ENCODE measurements at regions of chr3 and their contacts with region 1.

Region 1: DNA sequence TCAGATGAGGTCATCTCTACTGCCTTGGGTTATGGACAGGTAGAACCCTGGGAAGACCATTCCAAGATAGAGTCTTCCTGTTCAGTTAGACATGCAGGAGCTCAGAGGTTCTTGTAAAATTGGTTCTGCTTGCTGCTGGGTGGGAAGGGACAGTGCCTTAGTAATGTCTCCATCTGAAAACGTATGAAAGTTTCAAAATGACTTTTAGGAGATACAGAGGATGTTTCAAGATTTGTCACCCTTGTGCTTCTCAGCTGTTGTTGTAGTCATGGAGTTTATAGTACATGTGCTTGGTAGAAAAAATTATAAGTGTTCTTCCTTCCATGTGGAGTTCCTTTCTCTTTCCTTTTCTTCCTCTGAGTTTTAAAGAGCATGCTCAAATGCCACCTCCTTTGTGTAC is 885.2 kb upstream of the CFAP20DC start:
- DNase-seq: peak; percentile 6
- H3K4me3 Mint-ChIP-seq: peak overlapping the region; percentile 54
- H3K27ac Mint-ChIP-seq: peak overlapping the region; percentile 82
- H3K4me1 Mint-ChIP-seq: peaks cover 43% of the 10 kb centered on the region
- H3K27me3 Mint-ChIP-seq: no peaks in the 10 kb centered on the region

Region 2: DNA sequence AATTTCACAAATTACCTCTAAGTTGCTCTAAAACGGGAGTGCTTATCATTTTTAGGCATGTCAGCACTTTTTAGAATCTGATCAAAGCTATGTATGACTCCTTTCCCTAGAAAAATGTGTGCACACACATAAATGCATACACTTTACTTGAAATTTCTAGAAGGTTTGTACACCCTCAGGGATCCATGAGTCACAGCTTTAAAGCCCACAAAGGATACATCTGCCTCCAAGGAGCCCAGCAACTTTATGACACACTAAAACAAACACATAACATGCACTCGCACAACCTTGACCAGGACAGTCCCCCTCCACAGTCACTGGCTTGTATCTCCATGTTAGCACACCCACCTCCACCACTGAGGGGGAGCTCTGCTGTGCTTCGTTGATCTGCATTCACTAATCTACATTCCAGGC is 163.2 kb before region 1 on chr3:
- intact Hi-C with region 1: loop called (anchors 10 kb)
- DNase-seq: no peak
- H3K4me3 Mint-ChIP-seq: no peak overlapping the region
- H3K27ac Mint-ChIP-seq: peak overlapping the region; percentile 32
- H3K4me1 Mint-ChIP-seq: peaks cover 50% of the 10 kb centered on the region
- H3K27me3 Mint-ChIP-seq: peaks cover 7% of the 10 kb centered on the region

Region 3: GRCh38 chr3:59895972-59896371 is 39.1 kb before region 1 on chr3:
- intact Hi-C with region 1: no loop called
- DNase-seq: no peak
- H3K4me3 Mint-ChIP-seq: no peak overlapping the region
- H3K27ac Mint-ChIP-seq: no peak overlapping the region
- H3K4me1 Mint-ChIP-seq: peaks cover 19% of the 10 kb centered on the region
- H3K27me3 Mint-ChIP-seq: no peaks in the 10 kb centered on the region

Region 4: GRCh38 chr3:59957150-59957549 is 22.1 kb after region 1 on chr3:
- intact Hi-C with region 1: loop called (anchors 2 kb)
- DNase-seq: no peak
- H3K4me3 Mint-ChIP-seq: no peak overlapping the region
- H3K27ac Mint-ChIP-seq: no peak overlapping the region
- H3K4me1 Mint-ChIP-seq: peaks cover 33% of the 10 kb centered on the region
- H3K27me3 Mint-ChIP-seq: no peaks in the 10 kb centered on the region

Region 5: DNA sequence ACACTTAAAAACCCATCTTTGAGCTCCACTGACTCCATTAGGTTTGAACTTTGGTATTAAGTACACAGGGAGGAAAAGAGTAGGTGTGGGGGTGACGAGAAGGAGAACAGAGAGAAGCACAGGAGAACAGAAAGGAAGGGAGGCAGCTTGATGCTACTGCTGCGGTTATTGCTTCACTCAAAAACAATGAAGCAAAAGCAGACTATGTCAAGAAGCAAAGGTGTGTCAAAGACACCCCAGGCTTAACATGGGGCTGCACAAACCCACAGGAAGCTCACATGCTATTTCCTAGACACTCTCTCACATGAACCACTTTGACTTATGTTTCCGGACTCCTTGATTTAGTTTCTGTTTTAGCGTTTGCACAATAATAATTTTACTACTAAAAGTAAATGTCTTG is 75.8 kb after region 1 on chr3:
- intact Hi-C with region 1: loop called (anchors 1 kb)
- DNase-seq: peak; percentile 73
- H3K4me3 Mint-ChIP-seq: peak overlapping the region; percentile 74
- H3K27ac Mint-ChIP-seq: peak overlapping the region; percentile 91
- H3K4me1 Mint-ChIP-seq: peaks cover 76% of the 10 kb centered on the region
- H3K27me3 Mint-ChIP-seq: peaks cover 2% of the 10 kb centered on the region

Region 6: GRCh38 chr3:61251174-61251972 is 1316.3 kb after region 1 on chr3 and contains the start of gene FHIT:
- intact Hi-C with region 1: loop called (anchors 5 kb)
- DNase-seq: peak; percentile 90
- H3K4me3 Mint-ChIP-seq: peak within 1 kb of the TSS; percentile 96
- H3K27ac Mint-ChIP-seq: peak within 1 kb of the TSS; percentile 94
- H3K4me1 Mint-ChIP-seq: peaks cover 30% of the 10 kb centered on the region
- H3K27me3 Mint-ChIP-seq: peaks cover 12% of the 10 kb centered on the region
- total RNA-seq, gene FHIT: 19.9 and 22.6 TPM in 2 replicates

Measured in activated T-helper 1 cell treated with anti-CD3 and anti-CD28 coated beads, Interleukin-12 subunit alpha, Interleukin-12 subunit beta, Interleukin-2, Interleukin-4 antibody, amounts not matched to agents 30 ng/mL and 10 ng/mL and 1 ng/mL, durations not matched to agents 14 hours and 24 hours and 36 hours (primary cell).